Left ventricle myocardium superior (tissue), 1 donor: ENCODE measurements at regions of chr19 and their contacts with region 1.

Region 1: DNA sequence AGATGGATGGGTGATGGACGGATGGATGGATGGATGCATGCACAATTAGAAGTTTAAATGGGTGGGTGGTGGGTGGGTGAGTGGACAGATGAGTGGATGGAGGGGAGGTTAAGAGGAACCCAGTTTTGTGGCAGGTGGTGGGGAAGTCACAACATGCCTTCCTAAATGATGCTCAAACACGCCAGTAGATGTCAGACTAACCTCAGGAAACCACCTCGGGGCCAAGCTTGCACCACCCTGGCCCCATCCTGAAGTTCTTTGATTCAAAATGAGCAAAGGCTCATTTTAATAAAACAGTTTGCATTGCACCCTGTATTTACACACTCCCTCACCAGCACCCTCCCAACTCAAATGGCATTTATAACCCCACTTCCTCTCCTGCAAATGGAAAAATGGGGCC is 91.4 kb upstream of the CACNA1A start:
- DNase-seq: no peak
- ATAC-seq: peak; percentile 82

Region 2: GRCh38 chr19:13693889-13694288 is 96.2 kb after region 1 on chr19:
- intact Hi-C with region 1: no loop called
- DNase-seq: no peak
- ATAC-seq: no peak

Region 3: DNA sequence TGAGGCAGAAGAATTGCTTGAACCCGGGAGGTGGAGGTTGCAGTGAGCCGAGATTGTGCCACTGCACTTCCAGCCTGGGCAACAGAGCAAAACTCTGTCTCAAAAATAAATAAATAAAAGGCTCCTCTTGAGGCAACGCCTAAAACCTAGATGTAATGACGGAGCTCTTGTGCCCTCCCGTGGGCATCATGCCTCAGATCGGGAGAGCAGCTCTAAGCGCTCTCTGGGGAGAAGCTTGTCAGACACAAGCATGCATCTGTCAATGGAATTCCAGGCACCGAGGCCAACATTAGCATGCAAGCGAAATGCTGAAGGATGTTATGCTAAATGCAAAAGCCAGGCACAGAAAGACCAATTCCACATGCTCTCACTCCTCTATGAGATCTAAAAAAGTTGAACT is 121.1 kb after region 1 on chr19:
- intact Hi-C with region 1: loop called (anchors 5 kb)
- DNase-seq: peak; percentile 66
- ATAC-seq: peak; percentile 81